Heart right ventricle (tissue), 16 donors: ENCODE measurements at regions of chr1 and their contacts with region 1.

Region 1: GRCh38 chr1:17992800-17993199 is 114.8 kb upstream of the IGSF21 start:
- DNase-seq: no peak
- ATAC-seq: no peak
- H3K4me3 ChIP-seq: no peak overlapping the region
- H3K27ac ChIP-seq: no peak overlapping the region
- H3K4me1 ChIP-seq: no peaks in the 10 kb centered on the region
- H3K27me3 ChIP-seq: peaks cover 0 to 35% (median 7%) of the 10 kb centered on the region in 7 donors
- CTCF ChIP-seq: no peak

Region 2: DNA sequence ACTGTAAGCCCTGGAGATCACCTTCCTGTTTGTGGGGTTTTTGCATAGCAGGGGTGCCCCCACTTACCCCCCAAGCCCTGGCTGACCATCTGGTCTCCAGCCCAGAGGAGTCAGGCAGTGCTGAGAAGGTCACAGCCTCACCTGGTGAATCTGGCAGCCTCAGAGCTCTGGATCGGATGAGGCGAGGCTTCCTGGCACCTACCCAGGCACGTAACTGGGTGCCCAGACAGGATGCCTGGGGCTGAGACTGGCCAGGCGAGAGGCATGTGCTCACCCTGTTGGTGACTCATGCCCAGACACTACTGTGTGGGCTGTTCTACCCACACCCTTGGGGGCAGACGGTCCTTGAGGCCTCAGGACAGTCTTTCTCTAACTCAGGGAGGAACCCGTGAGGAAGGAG is 759.1 kb before region 1 on chr1:
- intact Hi-C with region 1: no loop called
- DNase-seq: peak in 1 of 2 donors; percentile 13
- ATAC-seq: peak in 7 of 8 donors; percentile 38 to 82 (median 66)
- H3K4me3 ChIP-seq: no peak overlapping the region
- H3K27ac ChIP-seq: no peak overlapping the region
- H3K4me1 ChIP-seq: peaks cover 0 to 6% (median 0%) of the 10 kb centered on the region in 9 donors
- H3K27me3 ChIP-seq: peaks cover 0 to 40% (median 9%) of the 10 kb centered on the region in 7 donors
- CTCF ChIP-seq: no peak

Region 3: GRCh38 chr1:18057623-18058022 is 64.8 kb after region 1 on chr1:
- intact Hi-C with region 1: loop called in 1 of 10 experiments (anchors 1 kb)
- DNase-seq: no peak
- ATAC-seq: peak in 2 of 8 donors; percentile 42 to 45
- H3K4me3 ChIP-seq: no peak overlapping the region
- H3K27ac ChIP-seq: no peak overlapping the region
- H3K4me1 ChIP-seq: no peaks in the 10 kb centered on the region
- H3K27me3 ChIP-seq: peaks cover 0 to 72% (median 43%) of the 10 kb centered on the region in 7 donors
- CTCF ChIP-seq: no peak